Sigmoid colon (tissue), 7 donors: ENCODE measurements at regions of chr7 and their contacts with region 1.

Region 1: DNA sequence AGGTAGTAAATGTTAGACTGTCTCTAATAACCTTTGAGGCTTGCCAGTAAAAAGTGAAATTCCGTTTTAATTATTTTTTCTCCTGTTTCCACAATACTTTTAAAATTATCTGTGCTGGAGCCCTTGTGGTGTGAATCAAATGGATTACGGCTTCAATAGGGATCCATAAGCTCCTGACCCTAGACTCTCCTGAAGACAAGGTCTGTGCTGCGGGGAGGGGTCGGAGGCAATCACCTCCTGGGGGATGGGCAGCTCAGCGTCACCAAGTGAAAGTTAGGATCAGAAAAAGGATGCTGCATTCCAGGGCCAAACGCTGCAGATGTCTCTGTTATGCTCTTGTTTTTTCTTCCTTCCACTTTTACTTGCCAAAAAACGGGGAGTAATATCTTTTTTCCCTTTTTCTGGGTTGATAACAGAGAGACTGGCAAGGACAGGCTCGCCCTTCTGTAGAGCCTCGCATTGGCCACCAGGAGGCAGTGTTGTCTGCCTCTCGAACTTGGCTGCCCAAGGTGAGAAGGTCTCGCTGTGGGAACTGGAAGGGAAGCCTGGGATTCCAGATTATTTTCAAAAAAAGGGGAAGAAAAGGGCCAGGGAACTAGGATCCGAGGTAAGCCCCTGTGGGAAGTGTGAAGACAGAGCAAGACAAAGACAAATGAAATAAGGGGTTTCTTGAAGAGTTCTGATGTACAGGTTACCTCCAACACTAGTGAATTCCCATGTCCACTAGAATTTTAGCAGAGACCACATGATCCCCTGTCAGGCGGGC is 621.9 kb downstream of the ACTR3B start:
- DNase-seq: peak; percentile 77
- H3K4me3 ChIP-seq: peak overlapping the region in 3 of 4 donors; percentile 10 to 30 (median 24)
- H3K27ac ChIP-seq: peak overlapping the region; percentile 64 to 82 (median 75)
- H3K4me1 ChIP-seq: peaks cover 0 to 49% (median 34%) of the 10 kb centered on the region in 4 donors
- H3K27me3 ChIP-seq: no peaks in the 10 kb centered on the region
- CTCF ChIP-seq: peak; percentile 91 to 97 (median 94)
- EP300 ChIP-seq: no peak
- POLR2A ChIP-seq: no peak

Region 2: DNA sequence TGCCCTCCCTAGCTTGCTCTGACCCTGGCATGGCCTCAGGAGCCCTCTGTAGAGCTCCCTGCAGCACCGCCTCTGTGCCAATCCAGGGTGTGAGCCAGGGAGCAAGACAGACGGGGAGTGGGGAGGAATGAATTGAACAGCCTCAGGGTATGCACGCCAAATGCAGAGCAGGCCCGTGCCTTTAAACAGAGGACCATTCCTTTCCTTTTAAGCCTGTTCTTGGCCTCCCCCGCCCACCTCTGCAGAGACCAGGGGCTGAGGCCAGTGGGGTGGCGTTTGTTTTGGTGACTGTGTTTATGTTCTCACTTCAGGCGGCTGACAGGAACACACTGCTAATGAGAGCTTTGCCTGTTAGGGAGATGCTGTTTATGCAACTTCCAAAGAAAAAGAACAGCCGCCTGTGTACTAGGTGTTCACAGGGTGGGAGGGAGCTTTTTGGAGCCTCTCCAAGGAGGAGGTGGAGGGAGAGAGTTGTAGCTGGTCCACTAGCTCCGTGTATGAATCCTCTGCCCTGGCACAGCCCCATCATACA is 142.7 kb after region 1 on chr7:
- intact Hi-C with region 1: loop called (anchors 1 kb)
- DNase-seq: peak; percentile 96
- H3K4me3 ChIP-seq: peak overlapping the region in 2 of 4 donors; percentile 1 to 2
- H3K27ac ChIP-seq: peak overlapping the region; percentile 81 to 88 (median 86)
- H3K4me1 ChIP-seq: peaks cover 0 to 62% (median 48%) of the 10 kb centered on the region in 4 donors
- H3K27me3 ChIP-seq: no peaks in the 10 kb centered on the region
- CTCF ChIP-seq: no peak
- EP300 ChIP-seq: peak; percentile 77 to 97 (median 92)
- POLR2A ChIP-seq: no peak

Region 3: DNA sequence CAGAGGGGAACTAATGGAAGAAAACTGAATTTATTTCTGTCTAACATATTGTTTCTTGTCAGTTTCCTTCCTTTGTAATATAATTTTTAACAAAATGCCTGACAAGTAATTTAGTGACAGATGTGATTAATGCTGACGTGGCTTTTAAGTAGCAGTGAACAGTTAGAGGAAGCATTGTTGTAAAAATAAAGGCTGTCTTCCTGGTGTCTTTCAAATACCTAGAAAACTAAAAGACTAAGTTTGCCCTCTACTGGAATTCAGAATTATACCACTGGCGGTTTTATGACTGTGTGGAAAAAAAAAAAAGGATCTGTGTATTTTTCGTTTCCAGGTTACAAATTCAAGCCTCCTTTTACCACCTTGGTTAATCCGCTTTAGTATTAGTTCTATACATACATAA is 453.6 kb after region 1 on chr7:
- intact Hi-C with region 1: loop called (anchors 1 kb)
- DNase-seq: no peak
- H3K4me3 ChIP-seq: no peak overlapping the region
- H3K27ac ChIP-seq: peak overlapping the region; percentile 50 to 71 (median 63)
- H3K4me1 ChIP-seq: peaks cover 0 to 41% (median 16%) of the 10 kb centered on the region in 4 donors
- H3K27me3 ChIP-seq: no peaks in the 10 kb centered on the region
- CTCF ChIP-seq: no peak
- EP300 ChIP-seq: no peak
- POLR2A ChIP-seq: no peak

Region 4: DNA sequence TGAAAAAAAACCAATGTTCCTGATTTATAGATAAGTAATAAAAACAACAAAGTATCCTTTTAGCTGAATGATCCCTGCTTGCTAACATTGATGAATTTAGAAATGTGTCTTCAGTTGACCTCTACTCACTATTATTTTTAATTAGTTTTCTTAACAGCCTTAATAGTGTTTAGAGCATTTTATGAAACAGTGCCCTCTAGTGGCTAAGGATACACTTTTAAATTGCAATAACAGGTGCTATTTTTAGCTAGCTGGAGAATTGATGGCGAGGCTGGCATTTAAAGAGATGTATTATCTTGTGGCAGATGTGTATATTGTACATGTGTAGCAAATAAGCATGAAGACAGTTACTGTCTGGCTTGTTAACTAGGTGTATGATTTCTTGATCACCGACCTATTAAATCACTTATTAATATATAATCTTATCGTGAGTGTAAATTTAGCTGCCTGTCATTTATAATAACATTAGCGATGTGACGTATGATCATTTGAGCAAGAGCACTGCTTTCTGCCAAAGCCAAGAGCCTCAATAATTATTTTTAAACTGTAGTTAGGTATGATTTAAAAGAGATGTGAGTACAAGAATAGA is 1122.6 kb after region 1 on chr7:
- intact Hi-C with region 1: loop called (anchors 2 kb)
- DNase-seq: no peak
- H3K4me3 ChIP-seq: no peak overlapping the region
- H3K27ac ChIP-seq: no peak overlapping the region
- H3K4me1 ChIP-seq: peaks cover 0 to 20% (median 15%) of the 10 kb centered on the region in 4 donors
- H3K27me3 ChIP-seq: no peaks in the 10 kb centered on the region
- CTCF ChIP-seq: peak in 3 of 4 experiments; percentile 33 to 64 (median 55)
- EP300 ChIP-seq: no peak
- POLR2A ChIP-seq: no peak